ENCODE measurements at regions of chr7 and their contacts with region 1.

Region 1: DNA sequence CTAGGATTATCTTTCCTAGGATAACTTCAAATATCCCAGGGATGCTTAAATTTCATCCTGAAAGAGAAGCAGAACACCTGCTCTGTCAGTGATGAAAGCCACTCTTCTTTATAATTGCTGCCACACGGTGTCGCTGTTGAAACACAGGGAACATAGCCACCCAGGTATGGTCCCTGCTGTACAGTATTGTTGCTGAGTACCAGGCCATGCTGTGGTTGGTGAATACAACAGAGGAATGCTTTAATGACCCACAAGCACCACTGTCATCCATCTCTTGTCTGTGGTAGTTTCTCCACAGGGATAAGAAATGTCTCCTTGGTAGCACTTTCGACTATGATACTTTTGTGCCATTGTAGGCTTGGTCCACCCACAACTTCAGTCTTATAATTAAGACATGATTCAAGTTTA is 70.6 kb upstream of the STARD3NL start:
- DNase-seq: peak; percentile 51 to 62 (median 54)
- H3K4me3 ChIP-seq: no peak overlapping the region
- H3K4me3 Mint-ChIP-seq: no peak overlapping the region
- H3K27ac ChIP-seq: no peak overlapping the region
- H3K27ac Mint-ChIP-seq: no peak overlapping the region
- H3K4me1 ChIP-seq: no peaks in the 10 kb centered on the region
- H3K4me1 Mint-ChIP-seq: peaks cover 0 to 2% (median 0%) of the 10 kb centered on the region in 4 donors
- H3K27me3 ChIP-seq: no peaks in the 10 kb centered on the region
- H3K27me3 Mint-ChIP-seq: peaks cover 13 to 15% of the 10 kb centered on the region in 2 donors

Region 2: DNA sequence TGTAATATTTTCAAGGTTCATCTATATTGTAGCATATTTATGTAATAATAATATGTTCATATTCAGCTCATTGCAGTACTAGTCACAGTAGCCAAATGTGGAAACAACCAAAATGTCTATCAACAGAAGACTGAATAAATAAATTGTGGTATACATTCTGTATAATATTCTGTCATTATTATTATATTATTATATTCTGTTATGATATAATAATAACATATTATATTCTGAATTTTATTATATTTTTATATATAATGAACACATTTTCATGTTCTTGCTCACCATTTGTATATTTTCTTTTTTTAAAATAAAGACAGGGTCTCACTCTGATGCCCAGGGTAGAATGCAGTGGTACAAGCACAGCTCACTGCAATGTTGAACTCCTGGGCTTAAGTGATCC is 20.6 kb before region 1 on chr7:
- CTCF ChIA-PET with region 1: no interaction called
- POLR2A ChIA-PET with region 1: no interaction called
- intact Hi-C with region 1: no loop called
- DNase-seq: no peak
- H3K4me3 ChIP-seq: no peak overlapping the region
- H3K4me3 Mint-ChIP-seq: no peak overlapping the region
- H3K27ac ChIP-seq: no peak overlapping the region
- H3K27ac Mint-ChIP-seq: no peak overlapping the region
- H3K4me1 ChIP-seq: no peaks in the 10 kb centered on the region
- H3K4me1 Mint-ChIP-seq: no peaks in the 10 kb centered on the region
- H3K27me3 ChIP-seq: no peaks in the 10 kb centered on the region
- H3K27me3 Mint-ChIP-seq: peaks cover 1 to 7% of the 10 kb centered on the region in 2 donors

Region 3: GRCh38 chr7:38142736-38143135 is 35.2 kb after region 1 on chr7:
- CTCF ChIA-PET with region 1: no interaction called
- POLR2A ChIA-PET with region 1: no interaction called
- intact Hi-C with region 1: loop called (anchors 1 kb)
- DNase-seq: no peak
- H3K4me3 ChIP-seq: no peak overlapping the region
- H3K4me3 Mint-ChIP-seq: no peak overlapping the region
- H3K27ac ChIP-seq: no peak overlapping the region
- H3K27ac Mint-ChIP-seq: no peak overlapping the region
- H3K4me1 ChIP-seq: no peaks in the 10 kb centered on the region
- H3K4me1 Mint-ChIP-seq: no peaks in the 10 kb centered on the region
- H3K27me3 ChIP-seq: no peaks in the 10 kb centered on the region
- H3K27me3 Mint-ChIP-seq: peaks cover 0 to 5% of the 10 kb centered on the region in 2 donors

Region 4: GRCh38 chr7:38222481-38223096 is 115.1 kb after region 1 on chr7:
- CTCF ChIA-PET with region 1: interaction called, 79 read pairs
- POLR2A ChIA-PET with region 1: interaction called, 3 read pairs
- intact Hi-C with region 1: loop called (anchors 1 kb)
- DNase-seq: peak in 4 of 5 donors; percentile 52 to 61 (median 58)
- H3K4me3 ChIP-seq: no peak overlapping the region
- H3K4me3 Mint-ChIP-seq: peak overlapping the region in 1 of 8 donors; percentile 1
- H3K27ac ChIP-seq: no peak overlapping the region
- H3K27ac Mint-ChIP-seq: peak overlapping the region in 6 of 7 donors; percentile 0 to 79 (median 53)
- H3K4me1 ChIP-seq: peaks cover 46% of the 10 kb centered on the region
- H3K4me1 Mint-ChIP-seq: peaks cover 20 to 68% (median 40%) of the 10 kb centered on the region in 4 donors
- H3K27me3 ChIP-seq: no peaks in the 10 kb centered on the region
- H3K27me3 Mint-ChIP-seq: no peaks in the 10 kb centered on the region

Region 5: GRCh38 chr7:38318803-38319416 is 211.4 kb after region 1 on chr7:
- CTCF ChIA-PET with region 1: interaction called, 12 read pairs
- POLR2A ChIA-PET with region 1: no interaction called
- intact Hi-C with region 1: no loop called
- DNase-seq: no peak
- H3K4me3 ChIP-seq: no peak overlapping the region
- H3K4me3 Mint-ChIP-seq: peak overlapping the region; percentile 70 to 87 (median 72)
- H3K27ac ChIP-seq: peak overlapping the region; percentile 31
- H3K27ac Mint-ChIP-seq: peak overlapping the region; percentile 72 to 90 (median 87)
- H3K4me1 ChIP-seq: peaks cover 36% of the 10 kb centered on the region
- H3K4me1 Mint-ChIP-seq: peaks cover 15 to 43% (median 22%) of the 10 kb centered on the region in 4 donors
- H3K27me3 ChIP-seq: no peaks in the 10 kb centered on the region
- H3K27me3 Mint-ChIP-seq: no peaks in the 10 kb centered on the region

Region 6: GRCh38 chr7:38351601-38352000 is 244.1 kb after region 1 on chr7:
- CTCF ChIA-PET with region 1: interaction called, 11 read pairs
- POLR2A ChIA-PET with region 1: no interaction called
- intact Hi-C with region 1: no loop called
- DNase-seq: no peak
- H3K4me3 ChIP-seq: no peak overlapping the region
- H3K4me3 Mint-ChIP-seq: peak overlapping the region; percentile 86 to 94 (median 90)
- H3K27ac ChIP-seq: no peak overlapping the region
- H3K27ac Mint-ChIP-seq: peak overlapping the region in 4 of 7 donors; percentile 52 to 92 (median 73)
- H3K4me1 ChIP-seq: peaks cover 12% of the 10 kb centered on the region
- H3K4me1 Mint-ChIP-seq: peaks cover 14 to 42% (median 26%) of the 10 kb centered on the region in 4 donors
- H3K27me3 ChIP-seq: no peaks in the 10 kb centered on the region
- H3K27me3 Mint-ChIP-seq: no peaks in the 10 kb centered on the region

Region 7: DNA sequence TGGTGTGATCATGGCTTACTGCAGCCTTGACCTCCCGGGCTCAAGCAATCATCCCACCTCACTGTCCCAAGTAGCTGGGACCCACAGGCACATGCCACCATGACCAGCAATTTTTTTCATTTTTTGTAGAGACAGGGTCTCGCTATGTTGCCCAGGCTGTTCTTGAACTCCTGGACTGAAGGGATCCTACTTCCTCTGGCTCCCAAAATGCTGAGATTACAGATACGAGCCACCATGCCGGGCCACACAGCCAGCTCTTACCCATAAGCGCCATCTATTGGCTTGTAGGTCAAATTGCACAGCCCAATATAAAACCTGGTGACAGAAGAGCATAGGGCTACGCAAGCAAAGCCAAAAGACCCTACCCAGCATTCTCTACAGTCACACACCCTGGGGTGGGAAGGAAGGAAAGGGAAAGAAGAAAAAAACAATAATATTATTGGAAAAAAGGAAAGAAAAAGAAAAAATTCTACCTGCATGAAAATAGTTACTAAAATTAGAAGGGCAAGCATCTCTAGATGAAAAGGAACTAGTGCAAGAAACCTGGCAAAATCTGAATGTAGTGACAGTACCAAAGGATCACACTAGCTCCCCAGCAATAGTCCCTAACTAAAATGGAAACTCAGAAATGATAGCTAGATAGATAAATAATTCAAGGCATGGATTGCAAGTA is 553.1 kb after region 1 on chr7:
- CTCF ChIA-PET with region 1: no interaction called
- POLR2A ChIA-PET with region 1: no interaction called
- intact Hi-C with region 1: loop called (anchors 10 kb)
- DNase-seq: peak in 4 of 5 donors; percentile 32 to 42 (median 34)
- H3K4me3 ChIP-seq: no peak overlapping the region
- H3K4me3 Mint-ChIP-seq: no peak overlapping the region
- H3K27ac ChIP-seq: no peak overlapping the region
- H3K27ac Mint-ChIP-seq: no peak overlapping the region
- H3K4me1 ChIP-seq: no peaks in the 10 kb centered on the region
- H3K4me1 Mint-ChIP-seq: no peaks in the 10 kb centered on the region
- H3K27me3 ChIP-seq: no peaks in the 10 kb centered on the region
- H3K27me3 Mint-ChIP-seq: peaks cover 20 to 23% of the 10 kb centered on the region in 2 donors

Measured in CD4-positive, alpha-beta memory T cell (primary cell).